ENCODE measurements at regions of chr1 and their contacts with region 1.

Region 1: GRCh38 chr1:52534928-52535764 is 17.7 kb downstream of the TUT4 start:
- DNase-seq: no peak
- H3K4me3 ChIP-seq: no peak overlapping the region
- H3K27ac ChIP-seq: no peak overlapping the region
- H3K4me1 ChIP-seq: no peaks in the 10 kb centered on the region
- H3K27me3 ChIP-seq: no peaks in the 10 kb centered on the region
- CTCF ChIP-seq: no peak

Region 2: GRCh38 chr1:52159033-52159789 is 375.9 kb before region 1 on chr1:
- CTCF ChIA-PET with region 1: no interaction called
- dilution Hi-C with region 1: no loop called
- in situ Hi-C with region 1: no loop called
- intact Hi-C with region 1: no loop called
- DNase-seq: peak; percentile 60
- H3K4me3 ChIP-seq: no peak overlapping the region
- H3K27ac ChIP-seq: peak overlapping the region; percentile 73
- H3K4me1 ChIP-seq: peaks cover 18% of the 10 kb centered on the region
- H3K27me3 ChIP-seq: no peaks in the 10 kb centered on the region
- CTCF ChIP-seq: no peak

Region 3: GRCh38 chr1:52487632-52488031 is 47.5 kb before region 1 on chr1:
- CTCF ChIA-PET with region 1: no interaction called
- dilution Hi-C with region 1: loop called (anchors 5 kb)
- in situ Hi-C with region 1: no loop called
- intact Hi-C with region 1: no loop called
- DNase-seq: no peak
- H3K4me3 ChIP-seq: no peak overlapping the region
- H3K27ac ChIP-seq: no peak overlapping the region
- H3K4me1 ChIP-seq: peaks cover 2% of the 10 kb centered on the region
- H3K27me3 ChIP-seq: no peaks in the 10 kb centered on the region
- CTCF ChIP-seq: no peak

Region 4: DNA sequence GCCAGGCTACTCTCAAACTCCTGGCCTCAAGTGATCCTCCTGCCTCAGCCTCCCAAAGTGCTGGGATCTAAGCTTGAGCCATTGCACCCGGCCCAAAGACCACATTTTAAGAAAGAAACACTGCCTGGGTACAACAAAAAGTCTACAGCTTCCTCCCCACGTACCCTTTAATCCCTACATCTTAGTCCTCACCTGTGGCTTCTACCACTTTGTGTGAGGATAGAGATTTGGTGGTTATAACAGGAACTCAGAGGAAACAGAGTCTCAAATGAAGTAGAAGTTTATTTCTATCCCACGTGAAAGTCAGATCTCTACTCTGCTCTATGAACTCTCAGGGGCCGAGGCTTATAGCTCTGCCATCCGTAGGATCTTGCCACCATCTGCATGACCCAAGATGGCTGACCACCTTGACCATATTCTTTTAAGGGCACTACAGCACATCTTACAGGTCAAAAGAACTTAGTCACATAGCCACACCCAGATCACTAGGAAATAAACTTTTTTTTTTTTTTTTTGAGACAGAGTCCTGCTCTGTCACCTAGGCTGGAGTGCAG is 80.4 kb after region 1 on chr1:
- CTCF ChIA-PET with region 1: no interaction called
- dilution Hi-C with region 1: loop called (anchors 5 kb)
- in situ Hi-C with region 1: no loop called
- intact Hi-C with region 1: no loop called
- DNase-seq: no peak
- H3K4me3 ChIP-seq: no peak overlapping the region
- H3K27ac ChIP-seq: no peak overlapping the region
- H3K4me1 ChIP-seq: no peaks in the 10 kb centered on the region
- H3K27me3 ChIP-seq: no peaks in the 10 kb centered on the region
- CTCF ChIP-seq: no peak